ENCODE measurements at regions of chr19 and their contacts with region 1.

Region 1: DNA sequence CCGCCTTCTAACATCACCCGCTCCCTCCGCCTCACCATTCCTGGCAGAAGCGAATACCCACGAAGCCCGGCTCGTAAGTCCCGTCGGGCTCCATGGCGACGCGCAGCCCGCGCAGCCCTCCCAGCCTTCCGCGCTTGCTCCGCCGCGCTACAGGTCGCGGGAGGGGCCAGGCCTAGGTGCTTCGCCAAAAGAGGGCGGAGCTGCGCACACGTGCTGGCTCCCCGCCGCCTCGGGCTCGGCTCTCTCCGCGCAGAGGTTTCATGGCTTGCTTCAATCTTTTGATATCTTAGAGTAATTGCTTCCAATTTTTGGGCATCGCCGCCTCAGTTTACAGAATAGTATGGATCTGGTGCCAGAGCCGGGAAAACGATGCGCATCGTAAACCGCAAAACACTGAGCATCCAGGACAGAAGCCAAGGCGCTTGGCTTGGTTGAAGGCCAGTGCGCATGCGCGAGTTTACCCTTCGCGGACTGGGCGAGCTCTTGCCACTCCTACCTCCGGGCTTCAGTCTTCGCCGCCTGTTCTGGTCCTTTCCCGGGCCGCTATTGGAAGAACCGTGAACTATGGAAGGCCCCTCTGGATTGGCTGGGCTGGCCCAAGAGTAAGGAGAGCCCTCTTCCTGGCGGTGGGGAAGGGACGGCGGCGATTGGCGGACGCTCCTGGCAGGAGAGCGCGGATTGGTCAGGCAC is at the start of gene POLR2I:
- DNase-seq: peak; percentile 99 to 100 (median 100)
- H3K4me3 ChIP-seq: peak within 1 kb of the TSS; percentile 75 to 99
- H3K4me3 Mint-ChIP-seq: peak within 1 kb of the TSS; percentile 89 to 99 (median 94)
- H3K27ac ChIP-seq: peak within 1 kb of the TSS; percentile 80
- H3K27ac Mint-ChIP-seq: peak within 1 kb of the TSS; percentile 95 to 100 (median 98)
- H3K4me1 ChIP-seq: peaks cover 30% of the 10 kb centered on the region
- H3K4me1 Mint-ChIP-seq: peaks cover 23 to 53% (median 37%) of the 10 kb centered on the region in 4 donors
- H3K27me3 ChIP-seq: no peaks in the 10 kb centered on the region
- H3K27me3 Mint-ChIP-seq: peaks cover 0 to 2% of the 10 kb centered on the region in 2 donors
- total RNA-seq, gene POLR2I: 52.4 to 55.0 TPM

Region 2: DNA sequence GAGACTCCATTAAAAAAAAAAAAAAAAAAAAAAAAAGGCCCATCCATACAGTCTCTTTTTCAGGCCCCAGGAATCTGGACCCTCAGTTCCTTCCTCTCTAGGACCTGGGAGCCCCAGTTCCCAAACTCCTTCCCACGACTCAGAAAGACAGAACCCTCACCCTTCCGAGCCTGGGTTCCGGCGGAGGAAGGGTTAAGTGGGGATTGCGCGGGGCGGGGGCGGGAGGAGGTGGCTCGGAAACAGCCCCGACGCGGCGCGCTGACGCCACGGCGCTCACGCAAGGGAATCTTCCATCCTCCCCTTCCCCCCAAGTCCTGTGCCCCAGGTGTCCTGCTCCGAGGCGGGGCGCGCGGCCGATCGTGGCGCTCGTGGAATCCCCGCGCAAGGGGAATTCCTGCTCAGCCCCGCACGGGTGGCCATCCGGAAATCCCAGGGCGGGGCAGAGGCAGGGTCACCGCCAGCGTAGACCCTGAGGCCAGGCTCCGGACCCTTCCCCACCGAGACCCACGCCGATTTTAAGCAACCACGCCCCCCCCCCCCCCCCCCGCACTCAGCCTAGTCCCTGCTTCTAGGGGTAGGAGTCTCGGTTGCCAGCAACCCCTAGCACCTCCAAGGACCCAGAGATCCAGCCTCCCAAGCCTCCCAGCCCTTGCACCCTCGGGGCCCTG is 215.2 kb before region 1 on chr19:
- CTCF ChIA-PET with region 1: no interaction called
- POLR2A ChIA-PET with region 1: no interaction called
- intact Hi-C with region 1: loop called (anchors 10 kb)
- DNase-seq: peak; percentile 86 to 94 (median 88)
- H3K4me3 ChIP-seq: peak overlapping the region; percentile 52 to 96
- H3K4me3 Mint-ChIP-seq: peak overlapping the region; percentile 94 to 100 (median 98)
- H3K27ac ChIP-seq: peak overlapping the region; percentile 100
- H3K27ac Mint-ChIP-seq: peak overlapping the region; percentile 92 to 99 (median 98)
- H3K4me1 ChIP-seq: peaks cover 67% of the 10 kb centered on the region
- H3K4me1 Mint-ChIP-seq: peaks cover 23 to 73% (median 53%) of the 10 kb centered on the region in 4 donors
- H3K27me3 ChIP-seq: no peaks in the 10 kb centered on the region
- H3K27me3 Mint-ChIP-seq: no peaks in the 10 kb centered on the region

Region 3: DNA sequence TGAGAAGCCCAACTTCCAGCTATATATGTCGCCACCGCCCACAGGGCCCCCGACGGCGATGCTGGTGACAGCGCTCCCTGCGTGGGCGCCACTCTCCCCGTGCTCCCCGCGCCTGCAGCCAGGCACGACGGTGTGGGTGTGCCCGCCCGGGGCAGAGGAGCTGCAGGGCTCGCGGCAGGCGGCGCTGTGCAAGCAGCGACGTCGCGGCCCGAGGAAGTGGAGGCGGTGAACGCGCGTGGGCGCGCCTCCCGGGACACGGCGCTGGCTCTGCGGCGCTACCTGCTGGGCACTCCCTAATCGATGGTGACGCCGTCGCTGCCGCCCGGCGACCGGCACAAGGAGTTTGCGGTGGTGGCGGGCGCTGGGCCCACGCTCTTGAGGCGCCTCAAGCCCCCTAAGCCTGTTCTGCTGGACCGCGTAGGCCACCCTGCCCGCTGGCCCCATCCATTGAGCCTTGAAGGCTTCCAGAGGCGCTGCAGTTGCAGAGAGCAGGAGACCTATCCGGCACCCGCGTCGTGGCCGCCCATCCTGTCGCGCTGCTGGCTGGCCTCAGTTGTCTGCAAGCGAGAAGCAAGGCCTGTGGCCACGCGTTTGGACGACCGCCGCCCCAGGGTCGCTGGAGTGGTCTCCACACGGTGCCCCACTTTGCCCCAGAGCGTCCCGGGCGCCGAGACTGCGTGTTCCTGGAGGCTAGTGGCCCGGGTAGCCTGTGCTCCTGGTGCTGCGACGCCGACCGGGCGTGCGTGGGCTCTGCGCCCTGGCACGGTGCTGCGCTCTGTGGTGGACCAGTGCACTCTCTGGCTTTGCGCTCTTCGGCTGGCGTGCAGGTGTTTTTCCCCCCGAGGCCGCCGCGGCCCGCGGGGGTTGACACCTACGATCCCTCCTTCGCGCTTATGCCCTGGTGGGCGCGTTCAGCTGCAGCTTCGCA is 155.6 kb before region 1 on chr19:
- CTCF ChIA-PET with region 1: interaction called, 6 read pairs
- POLR2A ChIA-PET with region 1: interaction called, 16 read pairs
- intact Hi-C with region 1: loop called (anchors 5 kb)
- DNase-seq: peak; percentile 85 to 87 (median 87)
- H3K4me3 ChIP-seq: peak overlapping the region; percentile 52 to 72
- H3K4me3 Mint-ChIP-seq: peak overlapping the region; percentile 66 to 87 (median 80)
- H3K27ac ChIP-seq: peak overlapping the region; percentile 36
- H3K27ac Mint-ChIP-seq: peak overlapping the region in 5 of 7 donors; percentile 29 to 77 (median 60)
- H3K4me1 ChIP-seq: peaks cover 48% of the 10 kb centered on the region
- H3K4me1 Mint-ChIP-seq: peaks cover 21 to 56% (median 32%) of the 10 kb centered on the region in 4 donors
- H3K27me3 ChIP-seq: no peaks in the 10 kb centered on the region
- H3K27me3 Mint-ChIP-seq: peaks cover 0 to 3% of the 10 kb centered on the region in 2 donors

Region 4: GRCh38 chr19:36014029-36014924 is 100.6 kb before region 1 on chr19 and contains the start of gene ALKBH6:
- CTCF ChIA-PET with region 1: no interaction called
- POLR2A ChIA-PET with region 1: interaction called, 13 read pairs
- intact Hi-C with region 1: loop called (anchors 1 kb)
- DNase-seq: peak; percentile 97 to 99 (median 98)
- H3K4me3 ChIP-seq: peak within 1 kb of the TSS; percentile 92
- H3K4me3 Mint-ChIP-seq: peak within 1 kb of the TSS; percentile 94 to 99 (median 94)
- H3K27ac ChIP-seq: peak within 1 kb of the TSS; percentile 74
- H3K27ac Mint-ChIP-seq: peak within 1 kb of the TSS; percentile 85 to 99 (median 98)
- H3K4me1 ChIP-seq: peaks cover 30% of the 10 kb centered on the region
- H3K4me1 Mint-ChIP-seq: peaks cover 25 to 50% (median 33%) of the 10 kb centered on the region in 4 donors
- H3K27me3 ChIP-seq: no peaks in the 10 kb centered on the region
- H3K27me3 Mint-ChIP-seq: no peaks in the 10 kb centered on the region
- total RNA-seq, gene ALKBH6: 50.9 to 51.0 TPM

Region 5: DNA sequence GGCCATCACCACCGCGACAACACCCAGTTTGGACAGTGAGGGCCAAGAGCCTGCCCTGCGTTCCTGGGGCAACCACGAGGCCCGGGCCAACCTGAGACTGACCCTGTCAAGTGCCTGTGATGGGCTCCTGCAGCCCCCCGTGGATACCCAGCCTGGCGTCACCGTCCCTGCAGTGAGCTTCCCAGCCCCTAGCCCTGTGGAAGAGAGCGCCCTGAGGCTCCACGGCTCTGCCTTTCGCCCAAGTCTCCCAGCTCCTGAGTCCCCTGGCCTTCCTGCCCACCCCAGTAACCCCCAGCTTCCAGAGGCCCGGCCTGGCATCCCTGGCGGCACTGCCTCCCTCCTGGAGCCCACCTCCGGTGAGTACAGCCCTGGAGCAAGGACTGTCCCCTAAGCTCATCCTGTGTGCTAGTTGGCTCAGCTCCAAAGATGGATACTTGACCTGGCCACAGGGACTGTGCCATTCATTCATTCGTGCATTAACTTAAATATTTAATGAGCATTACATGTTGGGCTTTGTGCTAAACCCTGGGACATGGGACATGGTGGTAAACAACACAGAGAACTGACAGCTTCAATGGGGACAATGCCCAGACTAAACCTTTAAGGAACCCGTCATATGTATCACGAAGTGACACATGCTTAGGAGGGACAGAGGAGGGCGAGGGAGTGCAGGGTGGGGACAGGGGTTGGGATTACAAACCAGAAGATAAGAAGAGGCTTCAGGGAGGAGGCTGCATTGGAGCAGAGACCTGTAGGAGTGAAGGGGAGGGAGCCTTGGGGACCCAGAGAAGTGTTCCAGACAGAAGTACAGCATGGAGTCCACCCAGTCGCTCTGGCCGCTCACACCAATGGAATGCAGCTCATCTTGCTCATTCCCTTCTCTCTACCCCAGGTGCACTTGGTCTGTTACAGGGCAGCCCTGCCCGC is 11.0 kb before region 1 on chr19:
- CTCF ChIA-PET with region 1: no interaction called
- POLR2A ChIA-PET with region 1: interaction called, 12 read pairs
- intact Hi-C with region 1: no loop called
- DNase-seq: no peak
- H3K4me3 ChIP-seq: no peak overlapping the region
- H3K4me3 Mint-ChIP-seq: no peak overlapping the region
- H3K27ac ChIP-seq: no peak overlapping the region
- H3K27ac Mint-ChIP-seq: peak overlapping the region in 1 of 7 donors; percentile 53
- H3K4me1 ChIP-seq: no peaks in the 10 kb centered on the region
- H3K4me1 Mint-ChIP-seq: no peaks in the 10 kb centered on the region
- H3K27me3 ChIP-seq: no peaks in the 10 kb centered on the region
- H3K27me3 Mint-ChIP-seq: no peaks in the 10 kb centered on the region

Region 6: DNA sequence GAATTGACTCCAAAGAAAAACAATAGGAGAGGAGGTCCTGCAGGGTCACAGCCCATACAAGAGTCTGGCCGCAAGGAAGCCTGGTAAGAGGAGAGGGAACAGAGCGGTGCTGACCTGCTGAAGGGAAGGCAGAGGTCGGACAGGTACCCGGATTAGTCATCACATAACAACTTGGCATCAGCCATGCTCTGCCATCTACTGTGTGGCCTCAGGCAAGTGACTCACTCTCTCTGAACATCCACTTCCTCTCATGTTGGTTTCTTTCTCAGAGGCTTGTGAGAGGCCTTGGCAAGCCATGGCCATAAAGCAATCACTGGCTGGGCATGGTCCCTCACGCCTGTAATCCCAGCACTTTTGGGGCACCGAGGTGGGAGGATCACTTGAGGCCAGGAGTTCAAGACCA is 17.6 kb after region 1 on chr19:
- CTCF ChIA-PET with region 1: interaction called, 21 read pairs
- POLR2A ChIA-PET with region 1: interaction called, 34 read pairs
- intact Hi-C with region 1: loop called (anchors 1 kb)
- DNase-seq: peak in 2 of 5 donors; percentile 14 to 54
- H3K4me3 ChIP-seq: no peak overlapping the region
- H3K4me3 Mint-ChIP-seq: peak overlapping the region in 4 of 8 donors; percentile 40 to 59 (median 54)
- H3K27ac ChIP-seq: no peak overlapping the region
- H3K27ac Mint-ChIP-seq: peak overlapping the region; percentile 29 to 86 (median 78)
- H3K4me1 ChIP-seq: peaks cover 32% of the 10 kb centered on the region
- H3K4me1 Mint-ChIP-seq: peaks cover 15 to 50% (median 29%) of the 10 kb centered on the region in 4 donors
- H3K27me3 ChIP-seq: no peaks in the 10 kb centered on the region
- H3K27me3 Mint-ChIP-seq: no peaks in the 10 kb centered on the region

Region 7: DNA sequence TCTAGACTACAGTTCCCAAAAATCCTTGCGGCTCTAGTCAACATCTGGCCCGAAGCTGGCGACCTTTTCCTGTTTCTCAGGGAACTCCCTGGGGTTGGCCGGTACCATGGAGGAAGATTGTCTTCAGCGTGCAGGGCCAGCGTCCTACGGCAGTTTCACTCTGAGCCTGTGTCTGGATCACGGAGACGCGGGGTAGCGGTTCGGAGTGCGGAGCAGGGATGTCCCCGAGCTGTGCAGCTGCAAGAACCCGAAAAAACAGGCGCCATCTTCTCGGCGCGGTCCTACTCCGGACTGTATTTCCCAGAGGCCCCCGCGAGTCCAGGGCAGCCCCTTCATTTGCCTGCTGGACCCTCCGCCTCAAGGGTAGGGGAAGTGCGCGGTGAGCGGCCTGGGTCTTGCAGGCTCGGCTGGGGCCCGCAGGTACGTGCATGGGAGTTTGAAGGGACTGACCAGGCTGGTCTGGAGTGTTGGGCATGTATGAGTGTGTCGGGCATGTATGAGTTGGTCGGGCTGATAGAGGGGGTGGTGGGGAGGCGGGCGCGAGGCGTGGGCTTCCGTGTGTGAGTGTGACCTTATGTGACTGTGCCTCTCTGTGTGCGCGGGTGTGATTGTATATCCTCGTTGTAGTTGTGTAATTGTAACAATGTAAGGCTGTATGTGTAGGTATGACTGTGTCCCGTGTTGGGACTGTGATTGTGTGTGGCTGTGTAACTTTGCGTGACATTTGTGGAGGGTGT is 1103.1 kb after region 1 on chr19 and contains the start of gene ZNF383:
- CTCF ChIA-PET with region 1: no interaction called
- POLR2A ChIA-PET with region 1: no interaction called
- intact Hi-C with region 1: loop called (anchors 10 kb)
- DNase-seq: peak; percentile 80 to 87 (median 83)
- H3K4me3 ChIP-seq: peak within 1 kb of the TSS; percentile 85 to 99
- H3K4me3 Mint-ChIP-seq: peak within 1 kb of the TSS; percentile 89 to 98 (median 91)
- H3K27ac ChIP-seq: peak within 1 kb of the TSS; percentile 80
- H3K27ac Mint-ChIP-seq: peak within 1 kb of the TSS; percentile 88 to 98 (median 96)
- H3K4me1 ChIP-seq: peaks cover 16% of the 10 kb centered on the region
- H3K4me1 Mint-ChIP-seq: peaks cover 19 to 40% (median 31%) of the 10 kb centered on the region in 4 donors
- H3K27me3 ChIP-seq: no peaks in the 10 kb centered on the region
- H3K27me3 Mint-ChIP-seq: no peaks in the 10 kb centered on the region
- total RNA-seq, gene ZNF383: 32.0 to 34.0 TPM

Measured in CD4-positive, alpha-beta memory T cell (primary cell).